Tibial artery (tissue), 4 donors: ENCODE measurements at regions of chr2 and their contacts with region 1.

Region 1: GRCh38 chr2:219199470-219200211 is 6.9 kb upstream of the ZFAND2B start:
- DNase-seq: no peak
- H3K4me3 ChIP-seq: no peak overlapping the region
- H3K27ac ChIP-seq: no peak overlapping the region
- H3K4me1 ChIP-seq: no peaks in the 10 kb centered on the region
- H3K27me3 ChIP-seq: peaks cover 0 to 33% of the 10 kb centered on the region in 2 donors
- CTCF ChIP-seq: no peak

Region 2: DNA sequence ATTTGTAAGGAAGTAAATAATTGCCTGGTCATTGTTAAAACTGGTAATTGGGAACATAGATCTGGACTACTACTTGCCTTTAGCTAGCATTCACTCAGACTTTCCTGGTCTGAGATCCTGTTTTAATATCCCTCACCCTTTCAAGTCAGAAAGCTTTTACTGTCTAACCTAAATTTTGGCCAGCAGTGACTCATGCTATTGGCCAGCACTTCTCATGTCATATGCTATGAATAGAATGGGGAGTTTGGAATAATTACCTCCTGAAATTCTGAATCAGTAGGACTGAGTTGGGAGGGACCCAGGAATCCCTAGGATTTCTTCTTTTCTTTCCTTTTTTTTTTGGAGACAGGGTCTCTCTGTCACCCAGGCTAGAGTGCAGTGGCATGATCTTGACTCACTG is 508.4 kb before region 1 on chr2:
- intact Hi-C with region 1: loop called (anchors 10 kb)
- DNase-seq: no peak
- H3K4me3 ChIP-seq: no peak overlapping the region
- H3K27ac ChIP-seq: peak overlapping the region in 1 of 2 donors; percentile 10
- H3K4me1 ChIP-seq: peaks cover 0 to 12% (median 0%) of the 10 kb centered on the region in 4 donors
- H3K27me3 ChIP-seq: no peaks in the 10 kb centered on the region
- CTCF ChIP-seq: no peak

Region 3: GRCh38 chr2:218777276-218777990 is 422.2 kb before region 1 on chr2:
- intact Hi-C with region 1: no loop called
- DNase-seq: no peak
- H3K4me3 ChIP-seq: no peak overlapping the region
- H3K27ac ChIP-seq: no peak overlapping the region
- H3K4me1 ChIP-seq: peaks cover 0 to 9% (median 4%) of the 10 kb centered on the region in 4 donors
- H3K27me3 ChIP-seq: no peaks in the 10 kb centered on the region
- CTCF ChIP-seq: no peak

Region 4: GRCh38 chr2:219119422-219120043 is 80.1 kb before region 1 on chr2:
- intact Hi-C with region 1: no loop called
- DNase-seq: peak in 1 of 2 donors; percentile 59
- H3K4me3 ChIP-seq: no peak overlapping the region
- H3K27ac ChIP-seq: no peak overlapping the region
- H3K4me1 ChIP-seq: peaks cover 0 to 19% (median 4%) of the 10 kb centered on the region in 4 donors
- H3K27me3 ChIP-seq: no peaks in the 10 kb centered on the region
- CTCF ChIP-seq: peak; percentile 72 to 73